Activated B cell treated with CpG ODN at 0.5 μM for 24 hours (primary cell): ENCODE measurements at regions of chr11 and their contacts with region 1.

Region 1: DNA sequence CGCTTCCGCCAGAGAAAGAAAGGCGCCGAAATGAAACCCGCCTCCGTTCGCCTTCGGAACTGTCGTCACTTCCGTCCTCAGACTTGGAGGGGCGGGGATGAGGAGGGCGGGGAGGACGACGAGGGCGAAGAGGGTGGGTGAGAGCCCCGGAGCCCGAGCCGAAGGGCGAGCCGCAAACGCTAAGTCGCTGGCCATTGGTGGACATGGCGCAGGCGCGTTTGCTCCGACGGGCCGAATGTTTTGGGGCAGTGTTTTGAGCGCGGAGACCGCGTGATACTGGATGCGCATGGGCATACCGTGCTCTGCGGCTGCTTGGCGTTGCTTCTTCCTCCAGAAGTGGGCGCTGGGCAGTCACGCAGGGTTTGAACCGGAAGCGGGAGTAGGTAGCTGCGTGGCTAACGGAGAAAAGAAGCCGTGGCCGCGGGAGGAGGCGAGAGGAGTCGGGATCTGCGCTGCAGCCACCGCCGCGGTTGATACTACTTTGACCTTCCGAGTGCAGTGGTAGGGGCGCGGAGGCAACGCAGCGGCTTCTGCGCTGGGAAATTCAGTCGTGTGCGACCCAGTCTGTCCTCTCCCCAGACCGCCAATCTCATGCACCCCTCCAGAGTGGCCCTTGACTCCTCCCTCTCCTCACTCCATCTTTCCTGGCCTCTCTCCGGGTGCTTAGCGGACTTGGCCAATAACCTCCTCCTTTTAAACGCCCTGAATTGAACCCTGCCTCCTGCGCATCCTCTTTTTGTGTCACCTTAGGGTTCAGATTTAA is at the start of gene ATM:
- DNase-seq: peak; percentile 94
- ATAC-seq: peak; percentile 82
- H3K4me3 Mint-ChIP-seq: no peak within 1 kb of the TSS
- H3K27ac Mint-ChIP-seq: no peak within 1 kb of the TSS
- H3K4me1 Mint-ChIP-seq: peaks cover 51% of the 10 kb centered on the region
- H3K27me3 Mint-ChIP-seq: no peaks in the 10 kb centered on the region
- CTCF ChIP-seq: no peak
- total RNA-seq, gene ATM: 164 and 184 TPM in 2 replicates

Region 2: GRCh38 chr11:107928046-107928766 is 294.7 kb before region 1 on chr11 and contains the start of gene RAB39A:
- CTCF ChIA-PET with region 1: no interaction called
- POLR2A ChIA-PET with region 1: no interaction called
- intact Hi-C with region 1: loop called (anchors 2 kb)
- DNase-seq: peak; percentile 82
- ATAC-seq: peak; percentile 87
- H3K4me3 Mint-ChIP-seq: peak within 1 kb of the TSS; percentile 91
- H3K27ac Mint-ChIP-seq: peak within 1 kb of the TSS; percentile 80
- H3K4me1 Mint-ChIP-seq: peaks cover 37% of the 10 kb centered on the region
- H3K27me3 Mint-ChIP-seq: peaks cover 4% of the 10 kb centered on the region
- CTCF ChIP-seq: no peak
- total RNA-seq, gene RAB39A: 3.6 and 4.1 TPM in 2 replicates

Region 3: GRCh38 chr11:108160970-108161566 is 61.8 kb before region 1 on chr11:
- CTCF ChIA-PET with region 1: no interaction called
- POLR2A ChIA-PET with region 1: no interaction called
- intact Hi-C with region 1: loop called (anchors 1 kb)
- DNase-seq: no peak
- ATAC-seq: peak; percentile 100
- H3K4me3 Mint-ChIP-seq: no peak overlapping the region
- H3K27ac Mint-ChIP-seq: peak overlapping the region; percentile 87
- H3K4me1 Mint-ChIP-seq: peaks cover 13% of the 10 kb centered on the region
- H3K27me3 Mint-ChIP-seq: no peaks in the 10 kb centered on the region
- CTCF ChIP-seq: no peak

Region 4: DNA sequence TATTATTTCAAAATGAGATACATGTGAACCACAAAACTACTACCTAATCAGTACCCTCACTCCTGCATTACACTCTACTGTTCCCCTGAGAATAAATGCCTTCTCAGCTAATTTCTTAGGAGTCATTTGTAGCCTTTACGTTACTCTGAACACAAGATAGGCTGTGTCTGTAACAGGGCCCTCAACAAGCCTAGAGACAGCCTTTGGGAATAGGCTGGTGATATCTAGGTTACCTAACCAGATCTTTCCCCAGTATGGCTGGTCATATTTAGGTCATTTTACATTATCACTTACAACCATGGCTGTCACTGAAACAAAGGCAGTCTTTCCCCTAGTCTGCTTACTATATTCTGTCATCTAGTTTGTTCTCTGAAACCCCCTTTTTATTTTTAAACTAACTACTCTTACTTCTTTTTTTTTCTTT is 14.2 kb after region 1 on chr11:
- CTCF ChIA-PET with region 1: interaction called, 34 read pairs
- POLR2A ChIA-PET with region 1: interaction called, 210 read pairs
- intact Hi-C with region 1: loop called (anchors 1 kb)
- DNase-seq: no peak
- ATAC-seq: peak; percentile 68
- H3K4me3 Mint-ChIP-seq: peak overlapping the region; percentile 67
- H3K27ac Mint-ChIP-seq: peak overlapping the region; percentile 91
- H3K4me1 Mint-ChIP-seq: peaks cover 53% of the 10 kb centered on the region
- H3K27me3 Mint-ChIP-seq: no peaks in the 10 kb centered on the region
- CTCF ChIP-seq: no peak

Region 5: DNA sequence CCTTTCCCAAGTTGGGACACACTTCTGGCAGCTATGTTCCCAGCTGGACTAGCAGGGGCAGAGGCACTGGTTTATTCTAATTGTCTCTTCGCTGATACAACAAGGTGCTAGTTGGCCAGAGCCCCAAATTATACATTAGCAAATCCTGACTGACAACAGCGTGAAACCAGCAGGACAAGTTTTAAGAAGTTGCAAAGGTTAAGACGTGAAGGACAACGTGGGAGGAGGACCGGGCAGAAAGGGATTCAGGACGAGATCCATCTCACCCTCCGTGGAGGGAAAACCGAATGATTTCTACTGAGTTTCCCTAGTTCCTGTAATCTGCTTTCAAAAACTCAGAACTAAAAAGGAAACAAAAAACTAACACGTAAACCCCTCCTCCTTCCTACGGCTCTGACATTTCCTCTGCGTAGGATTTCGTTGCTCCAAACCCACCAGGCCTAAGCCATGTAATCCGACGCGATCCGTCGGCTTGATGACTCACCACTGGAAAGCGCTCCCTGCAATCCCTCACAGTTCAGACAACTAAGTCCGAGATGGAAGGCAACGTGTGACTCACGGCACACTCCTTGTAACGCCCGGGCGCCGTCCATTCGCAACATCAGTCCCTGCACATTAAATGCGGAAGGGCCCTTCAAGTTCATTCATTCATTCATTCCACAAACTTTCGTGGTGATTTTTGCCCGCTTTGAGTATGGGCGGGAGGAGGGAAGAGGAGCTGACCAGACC is 274.6 kb after region 1 on chr11:
- CTCF ChIA-PET with region 1: no interaction called
- POLR2A ChIA-PET with region 1: no interaction called
- intact Hi-C with region 1: loop called (anchors 10 kb)
- DNase-seq: peak; percentile 51
- ATAC-seq: peak; percentile 71
- H3K4me3 Mint-ChIP-seq: peak overlapping the region; percentile 100
- H3K27ac Mint-ChIP-seq: peak overlapping the region; percentile 97
- H3K4me1 Mint-ChIP-seq: peaks cover 15% of the 10 kb centered on the region
- H3K27me3 Mint-ChIP-seq: no peaks in the 10 kb centered on the region
- CTCF ChIP-seq: no peak